ENCODE measurements at regions of chr2 and their contacts with region 1.

Region 1: DNA sequence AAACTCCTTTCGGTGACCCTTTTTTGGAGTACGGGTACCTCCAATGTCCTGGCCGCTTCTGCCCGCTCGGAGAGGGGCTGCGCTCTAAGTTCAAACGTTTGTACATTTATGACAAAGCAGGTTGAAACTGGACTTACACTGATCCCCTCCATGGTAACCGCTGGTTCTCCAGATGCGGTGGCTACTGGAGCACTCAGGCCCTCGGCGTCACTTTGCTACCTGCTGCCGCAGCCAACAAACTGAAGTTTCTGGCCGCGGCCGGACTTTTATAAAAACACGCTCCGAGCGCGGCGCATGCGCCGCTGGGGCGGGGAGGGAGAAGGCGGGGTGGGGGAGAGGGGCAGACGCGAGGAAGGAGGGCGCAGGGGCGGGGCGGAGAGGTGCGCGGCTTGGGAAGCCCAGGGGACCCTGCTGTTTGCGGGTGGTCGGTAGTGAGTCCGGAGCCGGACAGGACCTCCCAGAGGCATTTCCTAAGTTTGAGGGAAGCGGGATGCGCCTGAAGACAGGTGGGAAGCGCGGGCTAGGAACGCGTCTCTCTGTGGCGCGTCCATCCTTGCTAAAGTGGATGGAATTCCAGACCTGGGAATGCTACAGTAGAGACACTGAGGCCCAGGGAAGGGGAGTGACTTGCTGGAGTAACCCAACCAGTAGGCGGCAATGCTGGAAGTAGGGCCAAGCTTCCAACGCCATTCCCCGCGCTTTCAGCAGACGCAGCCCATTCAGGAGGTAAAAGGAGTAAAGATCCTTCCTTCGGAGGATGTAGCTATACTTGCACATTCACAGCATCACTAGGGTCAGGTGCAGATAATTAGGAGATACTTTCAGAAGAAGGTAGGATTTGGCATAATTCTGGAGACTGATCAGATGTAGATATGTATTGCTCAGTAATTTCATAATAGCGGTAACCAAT is at the start of gene CXCR4:
- DNase-seq: peak; percentile 86 to 98 (median 94)
- ATAC-seq: peak; percentile 28 to 31
- H3K4me3 Mint-ChIP-seq: peak within 1 kb of the TSS; percentile 93 to 100 (median 99)
- H3K27ac Mint-ChIP-seq: peak within 1 kb of the TSS; percentile 99 to 100 (median 100)
- H3K4me1 Mint-ChIP-seq: peaks cover 47 to 78% (median 67%) of the 10 kb centered on the region in 4 donors
- H3K27me3 Mint-ChIP-seq: peaks cover 0 to 7% (median 0%) of the 10 kb centered on the region in 5 donors
- polyA plus RNA-seq, gene CXCR4: 439 to 1,161 (median 485) TPM

Region 2: GRCh38 chr2:135985018-135985825 is 132.9 kb before region 1 on chr2 and contains the start of gene DARS1:
- POLR2A ChIA-PET with region 1: interaction called, 39 read pairs
- DNase-seq: peak; percentile 69 to 89 (median 78)
- ATAC-seq: peak; percentile 82 to 84
- H3K4me3 Mint-ChIP-seq: peak within 1 kb of the TSS; percentile 91 to 98 (median 96)
- H3K27ac Mint-ChIP-seq: peak within 1 kb of the TSS; percentile 98 to 100 (median 98)
- H3K4me1 Mint-ChIP-seq: peaks cover 11 to 59% (median 47%) of the 10 kb centered on the region in 4 donors
- H3K27me3 Mint-ChIP-seq: no peaks in the 10 kb centered on the region
- polyA plus RNA-seq, gene DARS1: 129 to 135 (median 133) TPM

Region 3: DNA sequence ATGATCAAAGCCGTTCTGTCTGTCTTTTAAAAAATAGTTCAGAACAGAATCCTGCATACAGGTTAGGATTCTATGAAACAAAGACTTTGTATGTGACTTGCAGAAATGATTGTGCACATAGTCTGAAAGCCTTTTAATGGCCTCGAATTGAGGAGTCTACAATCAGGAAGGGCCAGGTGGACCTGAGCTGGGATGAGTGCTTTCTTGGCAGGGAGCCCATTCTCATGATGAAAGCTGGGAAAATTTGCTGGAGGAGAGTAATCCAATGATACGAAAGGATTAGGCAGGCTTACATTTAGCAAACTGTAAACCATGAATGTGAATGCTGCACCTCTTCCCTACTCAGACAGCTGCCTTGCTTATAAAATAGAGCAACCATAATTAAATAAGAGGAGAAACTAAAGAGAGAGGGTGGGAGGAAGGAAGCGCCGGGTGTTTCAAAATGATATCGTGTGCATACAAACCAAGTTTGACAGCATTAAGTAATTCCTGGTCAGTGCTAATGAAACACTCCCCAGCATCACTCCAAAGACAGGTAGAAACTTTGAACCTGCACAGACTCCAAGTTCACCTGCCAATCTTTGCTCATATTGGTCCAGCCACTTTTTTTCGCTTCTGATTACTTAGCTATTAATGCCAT is 23.5 kb after region 1 on chr2:
- POLR2A ChIA-PET with region 1: interaction called, 703 read pairs
- DNase-seq: no peak
- ATAC-seq: no peak
- H3K4me3 Mint-ChIP-seq: peak overlapping the region in 9 of 10 donors; percentile 18 to 80 (median 58)
- H3K27ac Mint-ChIP-seq: peak overlapping the region; percentile 43 to 100 (median 99)
- H3K4me1 Mint-ChIP-seq: peaks cover 47 to 85% (median 80%) of the 10 kb centered on the region in 4 donors
- H3K27me3 Mint-ChIP-seq: no peaks in the 10 kb centered on the region

Region 4: DNA sequence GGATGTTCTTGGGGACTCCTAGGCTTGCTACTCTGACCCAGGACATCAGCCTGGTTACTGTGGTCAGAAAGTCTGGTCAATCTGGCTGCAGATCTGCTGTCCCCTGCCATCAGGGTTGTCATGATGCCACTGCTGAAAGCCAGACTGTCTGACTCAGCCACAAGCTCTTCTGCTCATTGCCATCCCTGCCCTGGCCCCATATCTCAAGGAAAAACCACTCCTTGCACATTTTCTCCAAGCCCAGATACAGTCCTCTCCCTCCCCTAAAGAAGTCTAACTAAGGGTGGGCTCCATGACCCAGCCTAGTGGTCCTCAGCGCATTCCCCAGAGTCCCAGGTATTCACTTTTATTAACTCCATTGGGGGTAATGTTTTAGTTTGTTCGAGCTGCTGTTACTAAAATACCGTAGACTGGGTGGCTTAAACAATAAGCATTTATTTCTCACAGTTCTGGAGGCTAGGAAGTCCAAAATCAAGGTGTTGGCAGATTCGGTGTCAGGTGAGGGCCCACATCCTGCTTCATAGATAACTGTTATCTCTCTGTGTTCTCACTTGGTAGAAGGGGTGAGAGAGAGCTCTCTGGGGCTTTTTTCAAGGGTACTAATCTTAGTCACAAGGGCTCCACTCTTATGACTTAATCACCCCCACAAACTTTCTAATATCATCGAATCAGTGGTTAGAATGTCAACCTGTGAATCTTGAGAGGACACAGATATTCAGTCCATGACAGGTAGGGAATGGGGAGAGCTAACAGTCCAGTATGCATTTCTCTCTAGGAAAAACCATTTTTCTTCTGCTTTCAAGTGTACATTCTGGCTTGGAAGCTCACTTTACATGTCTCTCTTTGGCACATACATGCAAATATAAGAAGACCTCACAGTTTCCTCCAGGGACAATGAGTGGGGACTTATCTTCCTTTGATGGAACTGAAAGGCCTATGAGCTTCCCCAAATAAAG is 94.5 kb after region 1 on chr2:
- POLR2A ChIA-PET with region 1: interaction called, 12 read pairs
- DNase-seq: peak in 7 of 10 donors; percentile 2 to 65 (median 42)
- ATAC-seq: peak; percentile 80 to 93
- H3K4me3 Mint-ChIP-seq: peak overlapping the region; percentile 19 to 61 (median 48)
- H3K27ac Mint-ChIP-seq: peak overlapping the region; percentile 91 to 95 (median 93)
- H3K4me1 Mint-ChIP-seq: peaks cover 30 to 84% (median 52%) of the 10 kb centered on the region in 4 donors
- H3K27me3 Mint-ChIP-seq: no peaks in the 10 kb centered on the region

Region 5: DNA sequence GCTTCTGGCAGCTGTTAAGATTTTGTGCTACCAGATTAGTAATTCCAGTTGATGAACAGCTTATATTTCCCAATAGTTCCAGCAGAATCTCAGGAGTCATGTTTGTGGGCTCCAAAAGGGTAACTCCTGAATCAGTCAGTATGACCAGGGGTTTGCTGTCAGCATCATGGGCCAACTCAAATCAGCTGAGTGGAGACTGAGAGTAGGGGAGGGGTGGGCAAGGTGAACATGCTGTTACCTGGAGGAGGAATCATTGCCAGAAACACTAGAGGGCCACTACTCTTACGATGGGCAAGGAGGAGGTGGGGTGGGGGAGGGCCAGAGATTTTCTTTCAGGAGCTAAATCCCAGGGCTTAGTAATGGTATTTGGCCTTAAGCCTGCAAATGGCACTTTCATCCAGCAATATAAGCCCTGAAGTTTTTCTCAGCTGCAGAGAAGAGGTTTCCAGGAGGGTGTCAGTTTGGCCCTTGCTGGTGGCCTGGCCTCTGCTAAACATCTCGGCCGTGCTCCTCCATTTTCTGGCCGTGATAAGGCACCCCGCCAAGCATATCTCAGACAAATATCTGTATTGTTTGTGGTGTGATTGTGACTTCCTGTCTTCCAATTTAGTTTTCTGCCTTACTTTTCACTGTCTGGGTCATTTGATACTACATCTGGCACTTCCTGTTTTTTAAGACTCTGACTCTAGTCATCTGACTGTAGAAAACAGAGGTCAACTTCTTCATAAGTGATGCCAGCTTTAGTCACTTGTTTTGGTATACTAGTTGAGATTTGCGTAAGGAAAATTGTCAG is 120.3 kb after region 1 on chr2:
- POLR2A ChIA-PET with region 1: interaction called, 47 read pairs
- DNase-seq: peak in 7 of 10 donors; percentile 18 to 73 (median 51)
- ATAC-seq: peak; percentile 77 to 86
- H3K4me3 Mint-ChIP-seq: peak overlapping the region in 9 of 10 donors; percentile 11 to 61 (median 38)
- H3K27ac Mint-ChIP-seq: peak overlapping the region; percentile 87 to 96 (median 94)
- H3K4me1 Mint-ChIP-seq: peaks cover 36 to 89% (median 58%) of the 10 kb centered on the region in 4 donors
- H3K27me3 Mint-ChIP-seq: no peaks in the 10 kb centered on the region

Region 6: GRCh38 chr2:136327162-136327852 is 209.1 kb after region 1 on chr2:
- POLR2A ChIA-PET with region 1: interaction called, 28 read pairs
- DNase-seq: peak; percentile 48 to 90 (median 82)
- ATAC-seq: peak; percentile 92 to 94
- H3K4me3 Mint-ChIP-seq: peak overlapping the region; percentile 69 to 86 (median 82)
- H3K27ac Mint-ChIP-seq: peak overlapping the region; percentile 94 to 100 (median 97)
- H3K4me1 Mint-ChIP-seq: peaks cover 36 to 76% (median 68%) of the 10 kb centered on the region in 4 donors
- H3K27me3 Mint-ChIP-seq: no peaks in the 10 kb centered on the region

Region 7: DNA sequence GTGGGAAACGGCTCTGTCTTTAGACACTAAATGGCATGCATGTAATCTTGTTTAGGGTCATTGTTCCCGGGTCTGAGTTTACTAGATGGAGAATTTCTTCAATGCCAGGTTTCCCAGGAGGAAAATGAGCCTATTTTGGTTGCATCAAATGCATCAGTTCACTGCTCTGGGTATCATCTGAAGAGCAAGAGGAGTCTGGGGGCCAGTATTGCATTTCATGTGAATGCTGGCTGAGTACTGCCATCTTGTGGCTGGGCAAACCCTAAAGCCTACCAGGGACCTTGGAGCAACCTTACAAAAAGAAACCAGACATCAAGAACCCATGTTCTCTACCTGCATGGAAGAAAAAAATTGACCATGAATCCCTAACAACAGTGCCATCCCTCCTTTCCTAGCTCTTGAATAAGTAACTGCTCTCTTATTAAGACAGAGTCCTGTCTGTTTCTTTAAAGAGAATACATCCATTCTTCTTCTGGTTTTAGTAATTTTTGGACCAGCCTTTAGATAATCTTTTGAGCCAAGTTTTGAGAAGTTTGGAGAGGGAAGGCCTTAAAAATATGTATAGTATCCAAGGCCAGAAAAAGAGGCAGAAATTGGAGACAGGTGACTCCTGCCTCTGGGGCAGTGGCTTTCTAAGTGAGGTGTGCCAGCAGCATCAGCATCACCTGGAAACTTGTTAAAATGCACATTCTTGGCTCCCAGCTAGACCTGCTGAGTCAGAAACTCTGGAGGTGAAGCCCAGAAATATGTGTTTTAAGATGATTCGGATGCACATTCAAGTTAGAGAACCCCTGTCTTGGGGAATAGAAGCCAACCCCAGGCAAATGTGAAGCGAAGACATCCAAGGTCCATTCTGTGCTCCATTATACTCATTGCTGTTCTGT is 260.8 kb after region 1 on chr2:
- POLR2A ChIA-PET with region 1: interaction called, 28 read pairs
- DNase-seq: peak; percentile 48 to 86 (median 76)
- ATAC-seq: peak; percentile 40 to 59
- H3K4me3 Mint-ChIP-seq: peak overlapping the region in 1 of 10 donors; percentile 18
- H3K27ac Mint-ChIP-seq: peak overlapping the region; percentile 5 to 91 (median 85)
- H3K4me1 Mint-ChIP-seq: peaks cover 42 to 79% (median 68%) of the 10 kb centered on the region in 4 donors
- H3K27me3 Mint-ChIP-seq: no peaks in the 10 kb centered on the region

Measured in naive thymus-derived CD8-positive, alpha-beta T cell (primary cell).